MCF 10A (cell line): ENCODE measurements at regions of chr11 and their contacts with region 1.

Region 1: GRCh38 chr11:72160319-72160718 is 24.8 kb downstream of the FOLR3 start:
- DNase-seq: no peak
- H3K4me3 Mint-ChIP-seq: no peak overlapping the region
- H3K27ac Mint-ChIP-seq: no peak overlapping the region
- H3K4me1 Mint-ChIP-seq: no peaks in the 10 kb centered on the region
- H3K27me3 Mint-ChIP-seq: no peaks in the 10 kb centered on the region
- CTCF ChIP-seq: no peak

Region 2: GRCh38 chr11:71086675-71087258 is 1073.6 kb before region 1 on chr11:
- CTCF ChIA-PET with region 1: no interaction called
- POLR2A ChIA-PET with region 1: no interaction called
- intact Hi-C with region 1: no loop called
- DNase-seq: peak; percentile 7
- H3K4me3 Mint-ChIP-seq: no peak overlapping the region
- H3K27ac Mint-ChIP-seq: no peak overlapping the region
- H3K4me1 Mint-ChIP-seq: no peaks in the 10 kb centered on the region
- H3K27me3 Mint-ChIP-seq: no peaks in the 10 kb centered on the region
- CTCF ChIP-seq: no peak

Region 3: DNA sequence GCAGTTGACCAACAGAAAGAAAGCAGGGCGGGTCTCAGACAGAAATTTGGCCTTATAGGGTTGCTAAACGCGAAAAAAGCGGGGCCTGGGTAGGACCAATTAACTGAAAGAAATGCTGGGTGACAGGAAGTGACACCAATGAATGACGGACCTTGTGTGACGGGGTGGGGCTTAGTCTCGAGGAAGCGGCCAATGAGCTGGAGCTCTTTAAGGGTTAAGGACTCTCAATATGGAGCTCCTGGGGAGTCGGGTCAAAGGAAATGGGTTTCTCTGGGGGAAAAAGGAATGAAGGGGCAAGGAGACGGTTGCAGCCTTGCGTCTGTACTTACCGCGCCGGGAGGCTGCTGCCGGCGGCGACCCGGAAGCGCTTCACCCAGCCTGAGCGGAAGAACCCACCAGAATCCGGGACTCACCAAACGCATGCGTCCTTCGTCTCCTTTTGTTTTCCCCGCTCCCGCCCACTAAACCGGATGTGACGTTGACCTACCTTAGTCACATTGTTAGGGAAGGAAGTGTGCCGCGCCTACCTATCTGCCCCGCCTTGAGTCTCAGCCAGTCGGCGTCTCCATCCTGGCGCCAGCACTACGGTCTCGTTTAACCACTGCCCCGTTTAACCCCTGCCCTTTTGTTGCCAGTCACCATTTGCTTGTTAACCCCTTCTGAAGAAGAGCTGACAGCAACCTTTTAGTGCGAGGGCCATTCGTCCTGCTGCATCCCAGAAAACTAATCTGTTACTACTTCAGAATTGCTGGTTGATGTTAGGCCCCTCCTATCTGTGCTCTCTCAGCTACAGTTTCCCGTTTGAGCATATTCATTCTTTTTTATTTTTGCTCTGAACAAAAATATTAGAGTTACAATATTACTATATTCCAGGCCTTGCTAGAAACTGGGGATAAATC is 47.7 kb before region 1 on chr11 and contains the start of gene ANAPC15:
- CTCF ChIA-PET with region 1: no interaction called
- POLR2A ChIA-PET with region 1: interaction called, 10 read pairs
- intact Hi-C with region 1: no loop called
- DNase-seq: peak; percentile 100
- H3K4me3 Mint-ChIP-seq: peak within 1 kb of the TSS; percentile 98
- H3K27ac Mint-ChIP-seq: peak within 1 kb of the TSS; percentile 100
- H3K4me1 Mint-ChIP-seq: peaks cover 20% of the 10 kb centered on the region
- H3K27me3 Mint-ChIP-seq: no peaks in the 10 kb centered on the region
- CTCF ChIP-seq: no peak
- total RNA-seq, gene ANAPC15: 52.2 and 63.6 TPM in 2 replicates

Region 4: GRCh38 chr11:72123117-72123653 is 37.1 kb before region 1 on chr11:
- CTCF ChIA-PET with region 1: no interaction called
- POLR2A ChIA-PET with region 1: no interaction called
- intact Hi-C with region 1: no loop called
- DNase-seq: no peak
- H3K4me3 Mint-ChIP-seq: no peak overlapping the region
- H3K27ac Mint-ChIP-seq: no peak overlapping the region
- H3K4me1 Mint-ChIP-seq: no peaks in the 10 kb centered on the region
- H3K27me3 Mint-ChIP-seq: no peaks in the 10 kb centered on the region
- CTCF ChIP-seq: no peak